Motor neuron (in vitro differentiated cells): ENCODE measurements at regions of chr1 and their contacts with region 1.

Region 1: DNA sequence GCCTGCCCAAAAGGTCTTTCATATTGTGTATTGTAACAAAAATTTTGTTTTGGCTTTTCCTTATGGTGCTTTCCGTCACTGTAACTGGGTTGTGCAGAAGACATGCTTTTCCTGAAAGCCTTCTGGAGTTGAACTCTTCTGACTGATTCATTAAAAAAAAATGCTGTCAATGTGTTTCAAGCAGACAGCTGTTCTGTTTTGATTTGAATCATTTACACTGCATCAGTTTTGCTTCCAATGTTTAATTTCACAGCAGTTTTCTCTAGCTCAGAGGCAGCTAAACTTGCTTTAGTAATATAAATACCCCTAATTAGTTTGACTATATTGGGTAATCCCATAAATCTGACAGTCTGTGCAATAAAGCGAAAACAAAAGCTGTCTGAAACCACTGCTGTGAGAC is 7.9 kb downstream of the UTP11 start:
- ATAC-seq: no peak
- H3K4me3 ChIP-seq: no peak overlapping the region
- H3K27ac ChIP-seq: no peak overlapping the region
- H3K4me1 ChIP-seq: no peaks in the 10 kb centered on the region

Region 2: GRCh38 chr1:38826262-38826661 is 805.9 kb after region 1 on chr1:
- in situ Hi-C with region 1: loop called (anchors 5 to 25 kb)
- ATAC-seq: peak; percentile 62 to 92 (median 78)
- H3K4me3 ChIP-seq: no peak overlapping the region
- H3K27ac ChIP-seq: no peak overlapping the region
- H3K4me1 ChIP-seq: peaks cover 23 to 51% of the 10 kb centered on the region in 2 donors